Spleen (tissue), 13 donors: ENCODE measurements at regions of chr3 and their contacts with region 1.

Region 1: GRCh38 chr3:30193625-30194044 is 412.8 kb upstream of the TGFBR2 start:
- DNase-seq: no peak
- H3K4me3 ChIP-seq: no peak overlapping the region
- H3K27ac ChIP-seq: no peak overlapping the region
- H3K4me1 ChIP-seq: peaks cover 0 to 29% (median 3%) of the 10 kb centered on the region in 6 donors
- H3K27me3 ChIP-seq: no peaks in the 10 kb centered on the region
- CTCF ChIP-seq: no peak
- POLR2A ChIP-seq: no peak

Region 2: DNA sequence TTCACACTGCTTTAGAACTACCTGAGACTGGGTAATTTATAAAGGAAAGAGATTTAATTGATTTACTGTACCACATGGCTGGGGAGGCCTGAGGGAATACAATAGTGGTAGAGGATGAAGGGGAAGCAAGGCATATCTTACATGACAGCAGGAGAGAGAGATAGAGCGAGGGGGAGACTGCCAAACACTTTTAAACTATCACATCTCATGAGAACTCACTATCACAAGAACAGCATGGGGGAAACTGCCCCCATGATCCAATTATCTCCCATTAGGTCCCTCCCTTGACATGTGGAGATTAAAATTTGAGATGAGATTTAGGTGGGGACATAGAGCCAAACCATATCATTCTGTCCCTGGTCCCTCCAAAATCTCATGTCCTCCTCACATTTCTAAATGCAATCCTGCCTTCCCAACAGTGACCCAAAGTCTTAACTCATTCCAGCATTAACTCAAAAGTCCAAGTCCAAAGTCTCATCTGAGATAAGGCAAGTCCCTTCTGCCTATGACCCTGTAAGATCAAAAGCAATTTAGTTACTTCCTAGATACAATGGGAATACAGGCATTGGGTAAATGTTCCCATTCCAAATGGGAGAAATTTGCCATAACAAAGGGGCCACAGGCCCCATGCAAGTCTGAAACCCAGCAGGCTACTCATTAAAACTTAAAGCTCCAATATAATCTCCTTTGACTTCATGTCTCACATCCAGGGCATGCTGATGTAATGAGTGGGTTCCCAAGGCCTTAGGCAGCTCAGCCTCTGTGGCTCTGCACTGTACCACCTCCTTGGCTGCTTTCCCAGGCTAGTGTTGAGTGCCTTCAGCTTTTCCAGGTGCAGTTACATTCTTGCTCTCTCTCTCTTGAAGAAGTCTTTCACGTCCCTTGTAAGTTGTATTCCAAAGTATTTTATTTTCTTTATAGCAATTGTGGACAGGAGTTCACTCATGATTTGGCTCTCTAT is 68.9 kb before region 1 on chr3:
- intact Hi-C with region 1: loop called (anchors 5 kb)
- DNase-seq: no peak
- H3K4me3 ChIP-seq: no peak overlapping the region
- H3K27ac ChIP-seq: no peak overlapping the region
- H3K4me1 ChIP-seq: no peaks in the 10 kb centered on the region
- H3K27me3 ChIP-seq: no peaks in the 10 kb centered on the region
- CTCF ChIP-seq: no peak
- POLR2A ChIP-seq: no peak